Activated CD4-positive, alpha-beta T cell treated with anti-CD3 and anti-CD28 coated beads for 36 hours (primary cell): ENCODE measurements at regions of chr12 and their contacts with region 1.

Region 1: GRCh38 chr12:49347384-49348237 is 923 bp downstream of the DNAJC22 start:
- DNase-seq: peak; percentile 84
- ATAC-seq: peak; percentile 67
- H3K4me3 Mint-ChIP-seq: peak overlapping the region; percentile 29
- H3K27ac Mint-ChIP-seq: no peak overlapping the region
- H3K4me1 Mint-ChIP-seq: peaks cover 39% of the 10 kb centered on the region
- H3K27me3 Mint-ChIP-seq: peaks cover 54% of the 10 kb centered on the region

Region 2: GRCh38 chr12:49279706-49280159 is 67.9 kb before region 1 on chr12:
- CTCF ChIA-PET with region 1: interaction called, 56 read pairs
- POLR2A ChIA-PET with region 1: no interaction called
- intact Hi-C with region 1: no loop called
- DNase-seq: no peak
- ATAC-seq: no peak
- H3K4me3 Mint-ChIP-seq: no peak overlapping the region
- H3K27ac Mint-ChIP-seq: no peak overlapping the region
- H3K4me1 Mint-ChIP-seq: no peaks in the 10 kb centered on the region
- H3K27me3 Mint-ChIP-seq: peaks cover 5% of the 10 kb centered on the region

Region 3: GRCh38 chr12:49288412-49288853 is 59.2 kb before region 1 on chr12:
- CTCF ChIA-PET with region 1: interaction called, 168 read pairs
- POLR2A ChIA-PET with region 1: no interaction called
- intact Hi-C with region 1: loop called (anchors 1 kb)
- DNase-seq: peak; percentile 81
- ATAC-seq: peak; percentile 80
- H3K4me3 Mint-ChIP-seq: no peak overlapping the region
- H3K27ac Mint-ChIP-seq: no peak overlapping the region
- H3K4me1 Mint-ChIP-seq: no peaks in the 10 kb centered on the region
- H3K27me3 Mint-ChIP-seq: peaks cover 22% of the 10 kb centered on the region

Region 4: GRCh38 chr12:49331380-49332222 is 16.0 kb before region 1 on chr12:
- CTCF ChIA-PET with region 1: interaction called, 20 read pairs
- POLR2A ChIA-PET with region 1: interaction called, 3 read pairs
- intact Hi-C with region 1: no loop called
- DNase-seq: no peak
- ATAC-seq: no peak
- H3K4me3 Mint-ChIP-seq: no peak overlapping the region
- H3K27ac Mint-ChIP-seq: no peak overlapping the region
- H3K4me1 Mint-ChIP-seq: peaks cover 10% of the 10 kb centered on the region
- H3K27me3 Mint-ChIP-seq: peaks cover 37% of the 10 kb centered on the region

Region 5: DNA sequence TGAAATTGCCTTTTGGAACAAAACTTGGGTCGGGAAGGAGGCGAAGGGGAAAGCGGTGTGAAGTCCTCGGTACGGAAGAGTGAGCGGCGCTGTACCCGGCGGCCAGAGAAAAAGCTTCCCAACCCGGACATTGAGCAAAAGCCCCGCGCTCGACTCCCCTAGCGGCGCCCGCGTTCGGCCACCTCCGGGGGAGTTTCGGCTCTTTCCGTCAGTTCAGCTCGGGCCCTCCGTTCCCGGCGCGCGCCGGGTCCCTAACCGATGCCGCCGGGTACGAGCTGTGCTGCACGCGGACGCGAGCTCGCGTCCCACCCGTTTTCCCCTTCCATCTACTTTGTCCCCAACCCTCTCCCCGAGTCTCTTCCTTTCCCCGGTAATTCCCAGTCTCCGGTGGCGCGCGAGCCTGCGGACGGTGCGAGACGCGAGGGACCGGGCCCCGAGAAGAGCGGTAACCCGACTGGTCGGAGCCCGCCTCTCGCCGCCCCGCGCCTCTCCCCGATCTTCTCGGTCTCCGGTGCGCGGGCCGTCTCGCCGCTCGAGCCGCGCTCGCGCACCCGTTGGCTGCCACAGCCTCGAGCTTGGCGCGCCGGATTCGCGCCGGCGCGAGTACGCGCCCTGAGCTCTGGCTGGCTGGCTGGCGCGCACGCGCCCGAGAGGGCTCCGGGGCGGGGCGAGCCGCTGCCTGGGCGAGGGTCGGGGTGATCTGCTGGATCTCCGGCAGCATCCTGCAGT is 19.2 kb after region 1 on chr12:
- CTCF ChIA-PET with region 1: interaction called, 20 read pairs
- POLR2A ChIA-PET with region 1: interaction called, 6 read pairs
- intact Hi-C with region 1: no loop called
- DNase-seq: peak; percentile 94
- ATAC-seq: peak; percentile 86
- H3K4me3 Mint-ChIP-seq: peak overlapping the region; percentile 97
- H3K27ac Mint-ChIP-seq: peak overlapping the region; percentile 99
- H3K4me1 Mint-ChIP-seq: peaks cover 25% of the 10 kb centered on the region
- H3K27me3 Mint-ChIP-seq: no peaks in the 10 kb centered on the region